H1 (cell line): ENCODE measurements at regions of chr11 and their contacts with region 1.

Region 1: GRCh38 chr11:130634961-130635473 is 186.6 kb downstream of the ADAMTS15 start:
- DNase-seq: no peak
- H3K4me3 ChIP-seq: no peak overlapping the region
- H3K27ac ChIP-seq: no peak overlapping the region
- H3K4me1 ChIP-seq: no peaks in the 10 kb centered on the region
- H3K27me3 ChIP-seq: no peaks in the 10 kb centered on the region
- CTCF ChIP-seq: no peak
- EP300 ChIP-seq: no peak
- POLR2A ChIP-seq: no peak
- RAD21 ChIP-seq: no peak

Region 2: GRCh38 chr11:130623670-130624668 is 11.0 kb before region 1 on chr11:
- CTCF ChIA-PET with region 1: interaction called, 10 read pairs
- POLR2A ChIA-PET with region 1: no interaction called
- DNase-seq: no peak
- H3K4me3 ChIP-seq: no peak overlapping the region
- H3K27ac ChIP-seq: no peak overlapping the region
- H3K4me1 ChIP-seq: no peaks in the 10 kb centered on the region
- H3K27me3 ChIP-seq: no peaks in the 10 kb centered on the region
- CTCF ChIP-seq: no peak
- EP300 ChIP-seq: no peak
- POLR2A ChIP-seq: no peak
- RAD21 ChIP-seq: peak in 1 of 2 experiments; percentile 18; a peak in 1 of 4 replicates